ENCODE measurements at regions of chr10 and their contacts with region 1.

Region 1: GRCh38 chr10:30413996-30414576 is 19.9 kb upstream of the MAP3K8 start:
- DNase-seq: peak in 6 of 7 donors; percentile 36 to 67 (median 56)
- H3K4me3 ChIP-seq: no peak overlapping the region
- H3K27ac ChIP-seq: no peak overlapping the region
- H3K4me1 ChIP-seq: peaks cover 6 to 9% of the 10 kb centered on the region in 2 donors
- H3K27me3 ChIP-seq: no peaks in the 10 kb centered on the region
- CTCF ChIP-seq: peak; percentile 70 to 95 (median 91)
- POLR2A ChIP-seq: no peak

Region 2: GRCh38 chr10:30359373-30360206 is 54.5 kb before region 1 on chr10:
- intact Hi-C with region 1: no loop called
- DNase-seq: peak in 6 of 7 donors; percentile 48 to 70 (median 67)
- H3K4me3 ChIP-seq: no peak overlapping the region
- H3K27ac ChIP-seq: no peak overlapping the region
- H3K4me1 ChIP-seq: no peaks in the 10 kb centered on the region
- H3K27me3 ChIP-seq: no peaks in the 10 kb centered on the region
- CTCF ChIP-seq: peak; percentile 41 to 68 (median 58)
- POLR2A ChIP-seq: no peak

Region 3: GRCh38 chr10:30534465-30535144 is 120.5 kb after region 1 on chr10:
- intact Hi-C with region 1: loop called (anchors 5 to 10 kb)
- DNase-seq: peak; percentile 59 to 93 (median 82)
- H3K4me3 ChIP-seq: no peak overlapping the region
- H3K27ac ChIP-seq: no peak overlapping the region
- H3K4me1 ChIP-seq: peaks cover 12 to 34% of the 10 kb centered on the region in 2 donors
- H3K27me3 ChIP-seq: no peaks in the 10 kb centered on the region
- CTCF ChIP-seq: peak; percentile 84 to 97 (median 88)
- POLR2A ChIP-seq: no peak

Measured in adrenal gland (tissue), 19 donors.